CD4-positive, alpha-beta memory T cell (primary cell): ENCODE measurements at regions of chr20 and their contacts with region 1.

Region 1: DNA sequence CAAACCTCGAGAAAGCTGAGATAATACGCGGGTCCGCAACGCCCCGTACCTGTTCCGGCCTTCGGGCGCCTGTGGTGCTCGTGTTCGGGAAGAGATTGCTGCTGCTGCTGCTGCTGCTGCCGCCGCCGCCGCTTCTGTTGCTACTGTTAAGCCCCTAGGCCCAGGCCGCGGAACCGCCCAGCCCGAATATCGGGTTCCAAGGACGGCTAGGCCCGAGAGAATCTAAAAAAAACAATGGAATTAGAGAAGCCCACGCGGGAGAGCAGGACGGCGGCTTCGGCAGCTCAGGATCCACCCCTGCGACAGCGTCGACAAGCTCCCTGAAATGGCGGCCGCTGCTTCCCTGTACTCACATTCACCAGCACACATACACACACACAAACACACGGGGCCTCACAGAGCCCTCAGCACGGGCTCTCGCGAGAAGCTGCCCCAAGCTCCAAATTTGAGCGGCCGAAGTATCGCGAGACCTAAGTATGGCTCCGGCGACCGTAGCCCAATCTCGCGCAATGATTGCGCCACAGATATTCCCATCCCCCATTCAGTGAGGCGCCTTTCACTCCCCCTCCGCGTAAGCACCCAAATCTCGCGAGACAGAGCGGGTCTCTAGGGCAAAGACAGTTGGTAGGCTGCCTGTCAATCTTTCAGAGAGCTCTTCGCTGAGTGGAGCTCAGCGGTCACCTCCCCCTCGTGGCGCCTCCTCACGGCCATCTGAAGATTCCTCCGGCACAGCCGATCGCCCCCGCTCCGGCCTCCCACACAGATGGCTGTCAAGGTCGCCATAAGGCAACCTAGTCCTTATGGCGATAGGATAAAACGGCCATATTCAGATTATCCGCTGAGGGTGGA is at the start of gene RBM39:
- DNase-seq: peak; percentile 99 to 100 (median 100)
- H3K4me3 ChIP-seq: peak within 1 kb of the TSS; percentile 78 to 99
- H3K4me3 Mint-ChIP-seq: peak within 1 kb of the TSS; percentile 98 to 100 (median 99)
- H3K27ac ChIP-seq: peak within 1 kb of the TSS; percentile 100
- H3K27ac Mint-ChIP-seq: peak within 1 kb of the TSS; percentile 98 to 100 (median 100)
- H3K4me1 ChIP-seq: peaks cover 58% of the 10 kb centered on the region
- H3K4me1 Mint-ChIP-seq: peaks cover 29 to 60% (median 40%) of the 10 kb centered on the region in 4 donors
- H3K27me3 ChIP-seq: no peaks in the 10 kb centered on the region
- H3K27me3 Mint-ChIP-seq: peaks cover 0 to 3% of the 10 kb centered on the region in 2 donors
- total RNA-seq, gene RBM39: 631 to 665 TPM

Region 2: DNA sequence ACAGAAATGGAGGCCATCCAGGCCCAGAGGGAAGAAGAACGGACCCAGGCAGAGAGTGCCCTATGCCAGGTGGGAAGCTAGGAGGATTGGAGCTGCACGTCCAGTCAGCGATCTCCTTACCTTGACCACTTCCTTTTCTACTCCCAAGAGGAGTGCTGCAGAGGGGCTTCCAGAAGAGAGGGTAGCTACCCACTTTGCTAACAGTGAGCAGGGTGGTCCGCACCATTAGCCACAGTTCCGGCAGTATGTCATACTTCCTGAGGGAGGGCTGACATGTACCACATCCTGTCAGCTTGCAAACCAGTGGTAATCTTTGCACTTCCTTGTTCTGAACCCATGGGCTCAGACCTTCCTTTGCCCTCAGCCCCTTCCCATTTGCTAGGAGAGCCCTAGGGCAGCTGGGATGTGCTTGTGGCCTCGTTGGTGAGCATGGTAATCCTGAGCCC is 251.4 kb before region 1 on chr20:
- CTCF ChIA-PET with region 1: no interaction called
- POLR2A ChIA-PET with region 1: interaction called, 30 read pairs
- intact Hi-C with region 1: loop called (anchors 1 kb)
- DNase-seq: peak; percentile 70 to 84 (median 74)
- H3K4me3 ChIP-seq: peak overlapping the region; percentile 48 to 97
- H3K4me3 Mint-ChIP-seq: peak overlapping the region; percentile 95 to 99 (median 99)
- H3K27ac ChIP-seq: peak overlapping the region; percentile 87
- H3K27ac Mint-ChIP-seq: peak overlapping the region; percentile 94 to 100 (median 98)
- H3K4me1 ChIP-seq: peaks cover 55% of the 10 kb centered on the region
- H3K4me1 Mint-ChIP-seq: peaks cover 38 to 81% (median 56%) of the 10 kb centered on the region in 4 donors
- H3K27me3 ChIP-seq: no peaks in the 10 kb centered on the region
- H3K27me3 Mint-ChIP-seq: no peaks in the 10 kb centered on the region

Region 3: GRCh38 chr20:35664544-35665221 is 77.4 kb before region 1 on chr20 and contains the starts of genes CPNE1 and RBM12:
- CTCF ChIA-PET with region 1: no interaction called
- POLR2A ChIA-PET with region 1: interaction called, 106 read pairs
- intact Hi-C with region 1: loop called (anchors 1 kb)
- DNase-seq: peak; percentile 94 to 95 (median 95)
- H3K4me3 ChIP-seq: peak within 1 kb of the TSS; percentile 98 to 99
- H3K4me3 Mint-ChIP-seq: peak within 1 kb of the TSS; percentile 88 to 98 (median 97)
- H3K27ac ChIP-seq: peak within 1 kb of the TSS; percentile 99
- H3K27ac Mint-ChIP-seq: peak within 1 kb of the TSS; percentile 95 to 100 (median 99)
- H3K4me1 ChIP-seq: peaks cover 49% of the 10 kb centered on the region
- H3K4me1 Mint-ChIP-seq: peaks cover 0 to 51% (median 36%) of the 10 kb centered on the region in 4 donors
- H3K27me3 ChIP-seq: no peaks in the 10 kb centered on the region
- H3K27me3 Mint-ChIP-seq: no peaks in the 10 kb centered on the region
- total RNA-seq, gene CPNE1: 316 to 353 TPM
- total RNA-seq, gene RBM12: 129 to 138 TPM

Region 4: GRCh38 chr20:35726759-35727711 is 15.1 kb before region 1 on chr20:
- CTCF ChIA-PET with region 1: interaction called, 4 read pairs
- POLR2A ChIA-PET with region 1: interaction called, 102 read pairs
- intact Hi-C with region 1: no loop called
- DNase-seq: no peak
- H3K4me3 ChIP-seq: no peak overlapping the region
- H3K4me3 Mint-ChIP-seq: peak overlapping the region in 1 of 8 donors; percentile 3
- H3K27ac ChIP-seq: no peak overlapping the region
- H3K27ac Mint-ChIP-seq: peak overlapping the region in 3 of 7 donors; percentile 31 to 72 (median 62)
- H3K4me1 ChIP-seq: peaks cover 42% of the 10 kb centered on the region
- H3K4me1 Mint-ChIP-seq: peaks cover 18 to 57% (median 40%) of the 10 kb centered on the region in 4 donors
- H3K27me3 ChIP-seq: no peaks in the 10 kb centered on the region
- H3K27me3 Mint-ChIP-seq: no peaks in the 10 kb centered on the region

Region 5: DNA sequence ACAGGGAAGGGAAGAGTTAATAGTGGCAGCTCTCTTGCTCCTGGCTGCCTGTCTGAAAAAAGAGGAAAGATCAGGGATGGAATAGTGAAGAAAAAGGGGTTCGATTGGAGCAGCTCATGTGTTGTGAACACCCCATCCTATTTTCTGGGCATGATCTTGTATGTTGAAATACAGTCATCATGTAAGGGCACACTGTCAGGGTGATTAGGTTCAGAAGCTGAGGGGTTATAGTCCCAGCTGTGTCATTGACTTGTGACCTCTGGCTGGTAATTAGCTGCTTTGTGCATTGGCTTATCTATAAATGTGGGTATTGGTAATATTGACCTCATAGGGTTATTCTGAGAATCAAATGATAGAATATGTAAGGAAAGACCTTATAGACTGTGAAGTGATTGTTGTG is 59.7 kb after region 1 on chr20:
- CTCF ChIA-PET with region 1: no interaction called
- POLR2A ChIA-PET with region 1: interaction called, 17 read pairs
- intact Hi-C with region 1: no loop called
- DNase-seq: no peak
- H3K4me3 ChIP-seq: no peak overlapping the region
- H3K4me3 Mint-ChIP-seq: no peak overlapping the region
- H3K27ac ChIP-seq: no peak overlapping the region
- H3K27ac Mint-ChIP-seq: peak overlapping the region in 6 of 7 donors; percentile 63 to 86 (median 70)
- H3K4me1 ChIP-seq: peaks cover 2% of the 10 kb centered on the region
- H3K4me1 Mint-ChIP-seq: peaks cover 6 to 25% (median 11%) of the 10 kb centered on the region in 4 donors
- H3K27me3 ChIP-seq: no peaks in the 10 kb centered on the region
- H3K27me3 Mint-ChIP-seq: no peaks in the 10 kb centered on the region

Region 6: DNA sequence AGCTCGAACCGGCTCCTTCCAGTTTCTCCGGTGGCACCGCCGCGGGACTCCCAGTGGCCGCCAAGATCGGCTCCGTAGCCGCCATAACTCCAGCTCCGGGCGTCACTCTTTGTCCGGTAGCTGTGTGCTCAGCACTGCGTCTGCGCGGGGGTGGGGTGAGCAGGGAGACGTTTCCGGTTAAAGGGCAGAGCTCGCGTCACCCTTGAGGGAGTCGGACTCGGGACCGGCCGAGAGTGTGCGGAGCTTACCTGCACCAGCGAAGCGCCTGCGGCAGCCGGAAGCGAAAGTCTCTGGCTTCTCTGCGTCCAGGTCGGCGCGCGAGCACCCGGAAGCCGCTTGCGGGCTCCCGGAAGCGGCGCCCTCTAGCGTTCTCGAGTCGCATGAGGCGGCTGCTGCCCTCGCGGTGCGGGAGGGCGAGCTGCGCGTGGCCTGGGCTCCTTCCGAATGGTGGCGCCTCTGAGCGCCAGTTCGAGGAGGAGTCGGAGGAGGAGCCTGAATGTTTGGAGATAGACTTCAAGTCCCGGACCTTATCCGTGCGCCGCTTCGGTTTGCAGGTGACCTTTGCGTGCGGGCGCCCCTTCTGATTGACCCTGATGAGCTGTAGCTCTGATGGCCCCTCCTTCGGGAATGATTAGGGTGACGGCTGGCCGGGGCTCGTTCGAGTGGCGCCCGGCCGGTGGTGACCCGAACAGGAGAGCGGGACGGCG is 212.2 kb after region 1 on chr20 and contains the start of gene SCAND1:
- CTCF ChIA-PET with region 1: interaction called, 14 read pairs
- POLR2A ChIA-PET with region 1: interaction called, 82 read pairs
- intact Hi-C with region 1: loop called (anchors 1 kb)
- DNase-seq: peak; percentile 97 to 99 (median 98)
- H3K4me3 ChIP-seq: peak within 1 kb of the TSS; percentile 64 to 96
- H3K4me3 Mint-ChIP-seq: peak within 1 kb of the TSS; percentile 99 to 100 (median 99)
- H3K27ac ChIP-seq: peak within 1 kb of the TSS; percentile 96
- H3K27ac Mint-ChIP-seq: peak within 1 kb of the TSS; percentile 99 to 100 (median 99)
- H3K4me1 ChIP-seq: peaks cover 25% of the 10 kb centered on the region
- H3K4me1 Mint-ChIP-seq: peaks cover 6 to 35% (median 14%) of the 10 kb centered on the region in 4 donors
- H3K27me3 ChIP-seq: no peaks in the 10 kb centered on the region
- H3K27me3 Mint-ChIP-seq: no peaks in the 10 kb centered on the region
- total RNA-seq, gene SCAND1: 45.1 to 53.8 TPM